Left cardiac atrium (tissue), 4 donors: ENCODE measurements at regions of chr3 and their contacts with region 1.

Region 1: DNA sequence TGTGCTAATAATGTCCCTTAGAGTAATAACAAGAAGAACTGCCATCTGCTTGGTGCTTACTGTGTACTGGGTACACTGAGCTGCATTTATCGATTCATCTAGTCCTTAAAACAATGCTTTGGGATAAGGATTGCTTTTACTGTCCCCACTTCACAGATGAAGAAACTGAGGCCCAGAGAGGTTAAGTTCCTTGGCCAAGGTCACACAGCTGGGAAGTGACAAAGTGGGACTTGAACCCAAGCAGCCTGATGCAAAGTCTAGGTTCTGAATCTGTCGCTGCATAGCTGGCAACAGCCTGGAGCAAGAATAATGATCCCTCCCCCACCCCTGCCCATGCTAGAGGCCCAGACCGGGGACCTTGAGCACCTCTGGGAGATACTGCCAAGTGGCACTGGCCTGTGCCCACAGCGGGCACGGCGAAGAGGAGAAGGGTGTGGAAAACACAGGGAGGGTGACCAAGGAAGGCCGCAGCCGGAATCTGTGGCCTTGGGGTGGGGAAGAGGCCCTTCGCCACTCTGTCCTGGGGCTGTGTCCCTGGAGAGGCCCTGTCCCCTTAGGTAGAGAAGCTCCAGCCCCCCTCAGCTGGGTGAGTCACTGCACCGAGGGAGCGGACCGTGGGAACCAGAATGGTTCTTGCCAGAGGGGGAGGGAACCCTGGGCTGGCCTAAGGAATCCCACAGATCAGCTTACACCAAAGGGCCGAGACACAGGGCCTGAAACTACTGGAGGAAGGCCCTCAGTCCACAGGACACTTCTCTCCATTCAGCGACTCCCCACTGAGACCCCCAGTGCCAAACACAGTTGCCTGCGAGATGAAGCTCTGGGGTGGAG is 3.5 kb downstream of the PLXND1 start:
- DNase-seq: peak; percentile 86
- ATAC-seq: peak; percentile 38 to 54

Region 2: GRCh38 chr3:128698211-128699064 is 904.5 kb before region 1 on chr3:
- intact Hi-C with region 1: no loop called
- DNase-seq: peak; percentile 49
- ATAC-seq: peak; percentile 88

Region 3: DNA sequence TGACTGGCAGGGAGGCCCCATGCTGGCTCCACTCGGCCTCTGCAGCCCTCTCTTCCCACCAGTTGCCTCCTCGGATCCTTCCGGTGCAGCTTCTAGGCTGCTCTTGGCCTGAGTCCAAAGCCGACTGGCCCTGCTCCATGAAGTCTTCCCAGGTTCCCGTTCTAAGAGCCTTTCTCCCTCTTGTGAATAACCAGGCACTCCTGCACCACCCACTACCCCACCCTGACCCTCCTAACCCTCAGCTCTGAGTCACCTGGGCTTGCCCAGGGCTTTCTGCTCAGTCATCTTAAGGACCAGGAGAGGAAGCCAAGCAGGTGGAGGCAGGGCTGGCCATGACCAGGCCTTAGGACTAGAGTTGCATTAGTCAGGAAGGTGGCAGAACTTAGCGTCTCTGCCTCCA is 391.2 kb before region 1 on chr3:
- intact Hi-C with region 1: no loop called
- DNase-seq: peak; percentile 79
- ATAC-seq: peak; percentile 76 to 99

Region 4: DNA sequence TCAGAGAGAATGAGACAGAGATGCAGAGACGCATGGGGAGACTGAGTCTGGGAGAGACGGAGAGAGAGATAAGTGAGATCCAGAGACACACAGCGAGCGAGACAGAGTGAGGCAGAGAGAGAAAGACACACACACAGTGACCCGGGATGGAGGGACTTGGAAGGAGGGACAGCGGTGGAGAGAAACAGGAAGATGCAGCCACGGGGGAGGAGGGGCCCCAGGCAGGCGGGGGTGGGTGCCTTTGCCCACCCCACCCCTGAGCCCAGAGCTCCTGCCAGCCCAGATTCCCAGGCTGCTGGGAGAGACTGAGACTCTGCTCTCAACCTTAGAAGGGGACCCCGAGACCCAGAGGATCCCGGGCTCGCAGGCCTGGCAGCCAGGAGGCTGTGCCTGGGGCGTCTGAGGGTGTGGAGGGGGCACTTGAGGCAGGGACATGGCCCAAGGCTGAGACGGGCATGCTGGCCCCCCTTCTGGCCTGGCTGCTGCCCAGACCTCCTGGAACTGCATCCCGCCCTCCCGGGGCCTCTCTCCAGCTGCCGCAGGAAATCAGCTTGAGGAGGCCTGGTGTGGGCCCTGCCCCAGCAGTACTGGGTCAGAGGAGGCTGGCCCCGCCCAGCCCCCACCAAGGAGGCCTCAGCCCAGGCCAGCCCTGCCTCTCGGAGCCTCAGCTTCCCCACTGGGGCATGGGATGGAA is 41.9 kb before region 1 on chr3:
- intact Hi-C with region 1: loop called in 1 of 2 experiments (anchors 5 kb)
- DNase-seq: peak; percentile 90
- ATAC-seq: peak; percentile 79 to 83

Region 5: GRCh38 chr3:129663026-129663446 is 60.1 kb after region 1 on chr3:
- intact Hi-C with region 1: no loop called
- DNase-seq: no peak
- ATAC-seq: no peak